PC-9 (cell line): ENCODE measurements at regions of chr2 and their contacts with region 1.

Region 1: DNA sequence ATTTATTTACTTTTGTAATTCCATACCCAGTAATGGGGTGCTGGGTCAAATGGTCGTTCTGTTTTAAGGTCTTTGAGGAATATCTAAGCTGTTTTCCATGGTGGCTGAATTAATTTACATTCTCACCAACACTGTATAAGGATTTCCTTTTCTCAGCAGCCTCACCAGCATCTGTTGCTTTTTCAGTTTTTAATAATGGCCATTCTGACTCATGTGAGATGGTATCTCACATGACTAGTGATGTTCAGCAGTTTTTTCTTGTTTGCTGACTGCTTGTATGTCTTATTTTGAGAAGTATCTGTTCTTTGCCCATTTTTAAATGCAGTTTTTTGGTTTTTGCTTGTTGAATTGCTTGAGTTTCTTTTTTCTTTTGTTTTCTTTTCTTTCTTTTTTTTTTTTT is 201.0 kb downstream of the RPRM start:
- DNase-seq: no peak
- H3K4me3 ChIP-seq: no peak overlapping the region
- H3K27ac ChIP-seq: no peak overlapping the region
- H3K4me1 ChIP-seq: no peaks in the 10 kb centered on the region
- H3K27me3 ChIP-seq: no peaks in the 10 kb centered on the region
- CTCF ChIP-seq: no peak

Region 2: GRCh38 chr2:152573168-152573567 is 704.4 kb before region 1 on chr2:
- CTCF ChIA-PET with region 1: no interaction called
- POLR2A ChIA-PET with region 1: no interaction called
- intact Hi-C with region 1: no loop called
- DNase-seq: no peak
- H3K4me3 ChIP-seq: no peak overlapping the region
- H3K27ac ChIP-seq: no peak overlapping the region
- H3K4me1 ChIP-seq: no peaks in the 10 kb centered on the region
- H3K27me3 ChIP-seq: no peaks in the 10 kb centered on the region
- CTCF ChIP-seq: no peak

Region 3: DNA sequence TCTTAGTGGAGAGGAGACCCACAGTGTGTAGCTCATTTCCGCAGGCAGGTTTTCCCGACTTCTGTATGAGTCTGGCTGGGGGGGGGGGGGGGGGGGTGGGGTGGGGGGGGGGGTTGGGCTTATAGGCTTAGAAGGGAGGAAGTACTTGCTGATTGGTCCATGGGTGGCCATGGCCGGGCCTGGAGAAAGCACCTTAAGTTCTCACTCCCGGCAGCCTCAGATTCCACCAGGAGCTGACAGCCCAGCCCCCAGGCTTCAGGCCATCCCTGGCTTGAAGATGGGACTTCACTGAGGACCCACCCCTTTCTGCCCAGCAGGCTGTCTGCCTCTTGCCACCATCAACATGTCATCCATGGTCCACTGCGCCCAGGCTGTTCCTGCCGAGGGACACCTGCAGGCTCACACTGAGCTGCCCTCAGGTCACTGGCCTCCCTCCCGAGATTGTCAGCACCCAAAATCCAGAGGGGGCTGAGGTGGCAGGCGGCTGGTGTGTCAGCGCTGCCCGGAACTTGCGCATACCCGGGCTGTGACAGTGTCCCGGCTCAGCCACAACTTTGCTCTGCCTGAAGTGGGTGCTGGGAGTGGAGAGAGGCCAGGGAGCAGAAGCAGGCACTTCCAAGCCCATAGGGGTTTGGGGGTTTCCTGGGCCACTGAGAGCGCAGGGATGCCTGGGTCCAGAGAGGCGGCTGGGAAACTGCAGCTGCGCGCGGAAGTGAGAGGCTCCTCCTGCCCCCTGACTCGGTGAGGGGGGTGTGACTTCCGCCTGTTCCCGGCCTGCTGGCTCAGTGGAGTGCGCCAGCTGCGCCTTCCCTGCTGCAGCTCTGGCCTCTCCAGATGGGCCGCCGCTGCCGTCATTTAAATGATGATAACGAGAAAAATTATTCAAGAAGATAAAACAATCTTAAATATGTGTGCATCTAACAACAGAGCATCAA is 55.0 kb before region 1 on chr2:
- CTCF ChIA-PET with region 1: no interaction called
- POLR2A ChIA-PET with region 1: no interaction called
- intact Hi-C with region 1: no loop called
- DNase-seq: peak in 1 of 2 experiments; percentile 28
- H3K4me3 ChIP-seq: no peak overlapping the region
- H3K27ac ChIP-seq: no peak overlapping the region
- H3K4me1 ChIP-seq: no peaks in the 10 kb centered on the region
- H3K27me3 ChIP-seq: no peaks in the 10 kb centered on the region
- CTCF ChIP-seq: no peak

Region 4: GRCh38 chr2:153623020-153623419 is 345.5 kb after region 1 on chr2:
- CTCF ChIA-PET with region 1: interaction called, 11 read pairs
- POLR2A ChIA-PET with region 1: no interaction called
- intact Hi-C with region 1: no loop called
- DNase-seq: no peak
- H3K4me3 ChIP-seq: no peak overlapping the region
- H3K27ac ChIP-seq: no peak overlapping the region
- H3K4me1 ChIP-seq: no peaks in the 10 kb centered on the region
- H3K27me3 ChIP-seq: no peaks in the 10 kb centered on the region
- CTCF ChIP-seq: no peak